CD4-positive, alpha-beta T cell (primary cell): ENCODE measurements at regions of chr3 and their contacts with region 1.

Region 1: DNA sequence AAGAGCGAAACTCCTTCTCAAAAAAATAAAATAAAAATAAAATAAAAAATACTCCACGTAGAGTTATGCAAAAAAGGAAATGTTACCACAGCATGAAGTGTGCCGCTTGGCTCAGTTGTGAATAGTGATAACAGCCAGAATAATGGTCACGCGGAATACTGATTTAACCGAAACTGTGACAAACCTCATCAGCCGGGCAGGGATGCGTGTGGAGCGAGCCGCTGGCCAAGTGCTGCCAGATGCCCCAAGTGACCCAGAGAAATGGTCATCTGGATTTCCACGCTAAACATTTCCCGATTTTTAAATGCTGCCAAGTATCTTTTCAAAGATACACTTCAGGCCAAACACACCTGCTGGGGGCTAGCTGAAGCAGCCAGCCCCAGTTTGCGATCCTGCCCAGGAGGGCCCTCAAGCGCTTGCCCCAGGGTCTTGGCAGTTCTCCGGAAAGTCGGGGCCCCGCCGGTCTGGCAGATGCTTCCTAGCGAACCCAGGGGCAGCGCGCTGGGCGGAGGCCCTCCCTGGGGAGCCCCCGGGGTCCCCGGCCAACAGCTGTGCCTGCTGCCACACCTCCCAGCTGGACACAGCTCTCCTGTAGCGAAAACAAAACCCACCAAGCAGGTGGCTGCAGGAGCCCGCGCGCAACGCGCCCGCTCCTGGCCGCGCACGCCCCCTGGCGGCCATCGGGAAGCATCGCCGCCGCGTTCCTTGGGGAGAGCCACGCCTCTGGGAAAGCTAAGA is 35.1 kb downstream of the CMTM6 start:
- DNase-seq: peak; percentile 44 to 90 (median 72)
- ATAC-seq: peak; percentile 84
- H3K4me3 ChIP-seq: peak overlapping the region; percentile 58
- H3K4me3 Mint-ChIP-seq: peak overlapping the region; percentile 54
- H3K27ac ChIP-seq: peak overlapping the region; percentile 18 to 53
- H3K27ac Mint-ChIP-seq: no peak overlapping the region
- H3K4me1 ChIP-seq: peaks cover 37% of the 10 kb centered on the region
- H3K4me1 Mint-ChIP-seq: peaks cover 55% of the 10 kb centered on the region
- H3K27me3 ChIP-seq: no peaks in the 10 kb centered on the region
- H3K27me3 Mint-ChIP-seq: no peaks in the 10 kb centered on the region
- CTCF ChIP-seq: peak; percentile 99

Region 2: GRCh38 chr3:32177702-32178198 is 289.8 kb before region 1 on chr3:
- CTCF ChIA-PET with region 1: interaction called, 5 read pairs
- POLR2A ChIA-PET with region 1: interaction called, 3 read pairs
- intact Hi-C with region 1: loop called (anchors 2 to 5 kb)
- DNase-seq: peak in 12 of 14 experiments; percentile 12 to 77 (median 34)
- ATAC-seq: peak; percentile 65
- H3K4me3 ChIP-seq: no peak overlapping the region
- H3K4me3 Mint-ChIP-seq: no peak overlapping the region
- H3K27ac ChIP-seq: no peak overlapping the region
- H3K27ac Mint-ChIP-seq: no peak overlapping the region
- H3K4me1 ChIP-seq: peaks cover 9% of the 10 kb centered on the region
- H3K4me1 Mint-ChIP-seq: peaks cover 12% of the 10 kb centered on the region
- H3K27me3 ChIP-seq: peaks cover 0 to under 1% of the 10 kb centered on the region in 2 experiments
- H3K27me3 Mint-ChIP-seq: no peaks in the 10 kb centered on the region
- CTCF ChIP-seq: peak; percentile 33

Region 3: GRCh38 chr3:32257639-32258038 is 209.9 kb before region 1 on chr3:
- CTCF ChIA-PET with region 1: no interaction called
- POLR2A ChIA-PET with region 1: no interaction called
- intact Hi-C with region 1: no loop called
- DNase-seq: no peak
- ATAC-seq: peak; percentile 39
- H3K4me3 ChIP-seq: no peak overlapping the region
- H3K4me3 Mint-ChIP-seq: no peak overlapping the region
- H3K27ac ChIP-seq: no peak overlapping the region
- H3K27ac Mint-ChIP-seq: no peak overlapping the region
- H3K4me1 ChIP-seq: peaks cover 3% of the 10 kb centered on the region
- H3K4me1 Mint-ChIP-seq: peaks cover 33% of the 10 kb centered on the region
- H3K27me3 ChIP-seq: no peaks in the 10 kb centered on the region
- H3K27me3 Mint-ChIP-seq: no peaks in the 10 kb centered on the region
- CTCF ChIP-seq: no peak

Region 4: DNA sequence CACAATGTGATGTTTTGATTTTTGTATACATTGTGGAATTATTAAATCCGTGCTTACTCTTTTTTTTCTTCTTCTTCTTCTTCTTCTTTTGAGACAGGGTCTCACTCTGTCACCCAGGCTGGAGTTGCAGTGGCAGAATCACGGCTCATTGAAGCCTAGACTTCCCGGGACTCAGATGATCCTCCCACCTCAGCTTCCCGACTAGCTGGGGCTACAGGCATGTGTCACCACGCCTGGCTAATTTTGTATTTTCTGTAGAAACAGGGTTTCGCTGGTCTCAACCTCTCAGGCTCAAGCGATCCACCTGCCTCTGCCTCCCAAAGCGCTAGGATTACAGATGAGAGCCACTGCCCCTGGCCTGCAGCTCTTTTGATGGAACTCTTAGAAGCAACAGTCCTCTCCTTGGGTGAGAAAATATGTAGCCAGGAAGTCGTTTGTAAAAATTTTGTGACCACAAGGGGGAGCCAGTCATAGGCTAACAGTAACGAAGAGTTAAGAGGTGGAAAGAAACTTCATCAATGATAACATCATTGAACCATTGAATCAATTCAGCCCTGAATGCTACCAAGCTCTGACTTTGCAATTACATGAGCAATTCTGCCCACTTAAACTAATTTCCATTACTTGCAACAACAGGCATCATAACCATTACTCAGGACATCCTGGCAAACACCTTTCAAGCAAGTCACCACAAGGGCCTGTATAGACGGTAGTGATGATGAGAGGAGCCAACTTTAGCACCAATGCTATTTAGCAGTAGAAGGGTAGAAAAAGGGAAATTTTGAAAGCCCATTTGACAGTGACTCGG is 92.5 kb before region 1 on chr3:
- CTCF ChIA-PET with region 1: interaction called, 61 read pairs
- POLR2A ChIA-PET with region 1: interaction called, 29 read pairs
- intact Hi-C with region 1: loop called (anchors 1 kb)
- DNase-seq: peak in 13 of 14 experiments; percentile 17 to 89 (median 62)
- ATAC-seq: peak; percentile 33
- H3K4me3 ChIP-seq: no peak overlapping the region
- H3K4me3 Mint-ChIP-seq: no peak overlapping the region
- H3K27ac ChIP-seq: no peak overlapping the region
- H3K27ac Mint-ChIP-seq: peak overlapping the region; percentile 76
- H3K4me1 ChIP-seq: peaks cover 32% of the 10 kb centered on the region
- H3K4me1 Mint-ChIP-seq: peaks cover 40% of the 10 kb centered on the region
- H3K27me3 ChIP-seq: no peaks in the 10 kb centered on the region
- H3K27me3 Mint-ChIP-seq: no peaks in the 10 kb centered on the region
- CTCF ChIP-seq: peak; percentile 75

Region 5: DNA sequence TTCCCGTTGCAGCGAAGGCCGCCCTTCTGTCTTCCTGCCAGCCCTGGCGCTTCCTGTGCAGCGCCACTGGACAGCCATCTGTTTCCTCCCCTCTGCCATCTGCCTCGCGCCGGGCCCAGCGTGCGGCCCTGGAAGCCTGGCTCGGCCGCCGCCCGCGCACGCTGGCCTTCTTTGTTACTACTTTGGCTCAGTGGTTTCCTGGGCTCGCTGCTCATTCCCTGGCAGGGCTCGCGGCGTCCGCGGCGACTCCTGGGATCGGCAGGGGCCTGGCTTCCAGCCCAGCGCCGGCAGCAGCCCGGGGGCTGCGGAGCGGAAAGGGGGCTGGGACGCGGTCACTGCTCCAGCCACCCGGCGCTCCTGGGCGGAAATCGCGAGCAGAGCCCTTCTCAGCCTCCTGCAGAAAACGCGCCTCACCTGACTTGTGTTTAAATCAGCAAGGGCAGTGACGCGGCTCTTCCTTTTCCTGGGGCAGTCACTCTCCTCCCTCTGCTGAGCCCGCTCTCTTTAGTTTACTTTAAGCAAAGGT is 65.9 kb before region 1 on chr3:
- CTCF ChIA-PET with region 1: interaction called, 49 read pairs
- POLR2A ChIA-PET with region 1: interaction called, 3 read pairs
- intact Hi-C with region 1: loop called (anchors 2 kb)
- DNase-seq: peak; percentile 37 to 84 (median 58)
- ATAC-seq: peak; percentile 73
- H3K4me3 ChIP-seq: peak overlapping the region; percentile 65
- H3K4me3 Mint-ChIP-seq: peak overlapping the region; percentile 92
- H3K27ac ChIP-seq: peak overlapping the region; percentile 85 to 92
- H3K27ac Mint-ChIP-seq: peak overlapping the region; percentile 90
- H3K4me1 ChIP-seq: peaks cover 62% of the 10 kb centered on the region
- H3K4me1 Mint-ChIP-seq: peaks cover 77% of the 10 kb centered on the region
- H3K27me3 ChIP-seq: no peaks in the 10 kb centered on the region
- H3K27me3 Mint-ChIP-seq: no peaks in the 10 kb centered on the region
- CTCF ChIP-seq: no peak

Region 6: GRCh38 chr3:32414520-32415202 is 52.8 kb before region 1 on chr3:
- CTCF ChIA-PET with region 1: interaction called, 11 read pairs
- POLR2A ChIA-PET with region 1: interaction called, 28 read pairs
- intact Hi-C with region 1: no loop called
- DNase-seq: peak in 10 of 14 experiments; percentile 34 to 86 (median 52)
- ATAC-seq: peak; percentile 95
- H3K4me3 ChIP-seq: no peak overlapping the region
- H3K4me3 Mint-ChIP-seq: peak overlapping the region; percentile 43
- H3K27ac ChIP-seq: peak overlapping the region; percentile 39 to 76
- H3K27ac Mint-ChIP-seq: peak overlapping the region; percentile 95
- H3K4me1 ChIP-seq: peaks cover 41% of the 10 kb centered on the region
- H3K4me1 Mint-ChIP-seq: peaks cover 83% of the 10 kb centered on the region
- H3K27me3 ChIP-seq: no peaks in the 10 kb centered on the region
- H3K27me3 Mint-ChIP-seq: no peaks in the 10 kb centered on the region
- CTCF ChIP-seq: no peak

Region 7: DNA sequence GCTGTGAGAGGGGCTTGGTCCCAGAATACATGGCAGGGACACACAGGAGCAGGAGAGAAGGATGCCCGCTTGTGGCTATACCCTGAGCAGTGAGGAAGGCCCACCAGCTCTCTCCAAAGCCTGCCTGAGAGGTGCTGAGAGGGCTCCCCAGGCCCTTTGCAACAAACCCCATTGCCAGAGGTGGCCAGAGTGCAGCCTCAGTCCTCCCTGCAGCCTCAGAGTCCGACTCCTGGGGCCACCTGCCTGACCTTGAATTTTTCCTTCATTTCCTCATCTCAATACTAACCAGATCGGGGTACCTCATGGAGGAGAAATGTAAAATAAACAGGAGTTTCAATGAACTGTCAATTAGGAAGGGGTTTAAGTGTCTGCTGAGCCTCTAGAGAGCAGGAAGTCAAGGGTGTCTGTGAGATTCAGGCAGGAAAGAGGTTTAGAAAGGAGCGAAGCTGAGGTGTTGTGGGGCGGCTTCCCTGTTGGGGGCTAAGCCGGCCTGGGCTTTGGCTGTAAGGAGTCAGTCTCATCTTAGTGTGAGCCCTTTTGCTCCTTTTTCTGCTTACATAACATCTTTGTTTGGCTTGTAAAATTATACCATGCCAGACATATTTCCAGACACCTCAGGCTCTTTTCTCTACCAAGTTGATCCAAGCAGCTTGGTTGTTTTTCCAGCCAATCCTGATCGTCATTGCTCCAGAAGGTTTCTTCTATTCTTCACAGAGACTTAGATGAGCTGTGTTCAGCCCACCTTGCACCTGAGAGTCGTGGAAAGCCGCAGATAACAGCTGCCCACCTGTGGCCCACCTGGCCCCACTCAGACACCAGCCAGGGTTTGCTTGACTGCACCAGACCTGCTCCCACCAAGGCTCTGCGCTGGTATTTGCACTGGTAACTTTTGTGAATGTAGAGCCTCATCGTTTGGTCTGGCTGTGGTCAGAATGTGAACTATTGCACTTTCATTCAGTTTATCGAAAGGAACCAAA is 39.1 kb before region 1 on chr3:
- CTCF ChIA-PET with region 1: interaction called, 25 read pairs
- POLR2A ChIA-PET with region 1: interaction called, 12 read pairs
- intact Hi-C with region 1: loop called in 1 of 2 experiments (anchors 5 kb)
- DNase-seq: peak in 12 of 14 experiments; percentile 18 to 81 (median 43)
- ATAC-seq: peak; percentile 58
- H3K4me3 ChIP-seq: peak overlapping the region; percentile 29
- H3K4me3 Mint-ChIP-seq: peak overlapping the region; percentile 80
- H3K27ac ChIP-seq: peak overlapping the region; percentile 73 to 83
- H3K27ac Mint-ChIP-seq: peak overlapping the region; percentile 95
- H3K4me1 ChIP-seq: peaks cover 81% of the 10 kb centered on the region
- H3K4me1 Mint-ChIP-seq: peaks cover 90% of the 10 kb centered on the region
- H3K27me3 ChIP-seq: no peaks in the 10 kb centered on the region
- H3K27me3 Mint-ChIP-seq: no peaks in the 10 kb centered on the region
- CTCF ChIP-seq: no peak

Region 8: GRCh38 chr3:33218446-33219174 is 751.1 kb after region 1 on chr3 and contains the start of gene SUSD5:
- CTCF ChIA-PET with region 1: no interaction called
- POLR2A ChIA-PET with region 1: no interaction called
- intact Hi-C with region 1: no loop called
- DNase-seq: no peak
- ATAC-seq: no peak
- H3K4me3 ChIP-seq: no peak within 1 kb of the TSS
- H3K4me3 Mint-ChIP-seq: no peak within 1 kb of the TSS
- H3K27ac ChIP-seq: no peak within 1 kb of the TSS
- H3K27ac Mint-ChIP-seq: no peak within 1 kb of the TSS
- H3K4me1 ChIP-seq: peaks cover 3% of the 10 kb centered on the region
- H3K4me1 Mint-ChIP-seq: peaks cover 6% of the 10 kb centered on the region
- H3K27me3 ChIP-seq: peaks cover 21 to 49% of the 10 kb centered on the region in 2 experiments
- H3K27me3 Mint-ChIP-seq: peaks cover 70% of the 10 kb centered on the region
- CTCF ChIP-seq: no peak
- total RNA-seq, gene SUSD5: not detected